ENCODE measurements at regions of chr3 and their contacts with region 1.

Region 1: GRCh38 chr3:185353823-185354614 is 8.9 kb upstream of the MAP3K13 start:
- DNase-seq: peak; percentile 21 to 66 (median 50)
- ATAC-seq: peak; percentile 97
- H3K4me3 ChIP-seq: no peak overlapping the region
- H3K4me3 Mint-ChIP-seq: no peak overlapping the region
- H3K27ac ChIP-seq: no peak overlapping the region
- H3K27ac Mint-ChIP-seq: no peak overlapping the region
- H3K4me1 ChIP-seq: no peaks in the 10 kb centered on the region
- H3K4me1 Mint-ChIP-seq: no peaks in the 10 kb centered on the region
- H3K27me3 ChIP-seq: no peaks in the 10 kb centered on the region
- H3K27me3 Mint-ChIP-seq: peaks cover 17 to 36% (median 23%) of the 10 kb centered on the region in 5 donors

Region 2: GRCh38 chr3:185559706-185560090 is 205.7 kb after region 1 on chr3:
- CTCF ChIA-PET with region 1: no interaction called
- POLR2A ChIA-PET with region 1: no interaction called
- intact Hi-C with region 1: loop called (anchors 1 kb)
- DNase-seq: no peak
- ATAC-seq: no peak
- H3K4me3 ChIP-seq: no peak overlapping the region
- H3K4me3 Mint-ChIP-seq: peak overlapping the region in 6 of 10 donors; percentile 44 to 86 (median 76)
- H3K27ac ChIP-seq: no peak overlapping the region
- H3K27ac Mint-ChIP-seq: peak overlapping the region in 1 of 9 donors; percentile 85
- H3K4me1 ChIP-seq: peaks cover 0 to 12% of the 10 kb centered on the region in 2 donors
- H3K4me1 Mint-ChIP-seq: peaks cover 7 to 33% (median 18%) of the 10 kb centered on the region in 7 donors
- H3K27me3 ChIP-seq: no peaks in the 10 kb centered on the region
- H3K27me3 Mint-ChIP-seq: peaks cover 0 to 5% (median 2%) of the 10 kb centered on the region in 5 donors

Region 3: GRCh38 chr3:185572183-185572582 is 218.2 kb after region 1 on chr3:
- CTCF ChIA-PET with region 1: no interaction called
- POLR2A ChIA-PET with region 1: no interaction called
- intact Hi-C with region 1: loop called (anchors 1 to 5 kb)
- DNase-seq: no peak
- ATAC-seq: no peak
- H3K4me3 ChIP-seq: no peak overlapping the region
- H3K4me3 Mint-ChIP-seq: no peak overlapping the region
- H3K27ac ChIP-seq: no peak overlapping the region
- H3K27ac Mint-ChIP-seq: no peak overlapping the region
- H3K4me1 ChIP-seq: peaks cover 0 to 5% of the 10 kb centered on the region in 2 donors
- H3K4me1 Mint-ChIP-seq: peaks cover 6 to 8% (median 6%) of the 10 kb centered on the region in 7 donors
- H3K27me3 ChIP-seq: no peaks in the 10 kb centered on the region
- H3K27me3 Mint-ChIP-seq: no peaks in the 10 kb centered on the region

Measured in naive thymus-derived CD4-positive, alpha-beta T cell (primary cell).